ENCODE measurements at regions of chr14 and their contacts with region 1.

Region 1: DNA sequence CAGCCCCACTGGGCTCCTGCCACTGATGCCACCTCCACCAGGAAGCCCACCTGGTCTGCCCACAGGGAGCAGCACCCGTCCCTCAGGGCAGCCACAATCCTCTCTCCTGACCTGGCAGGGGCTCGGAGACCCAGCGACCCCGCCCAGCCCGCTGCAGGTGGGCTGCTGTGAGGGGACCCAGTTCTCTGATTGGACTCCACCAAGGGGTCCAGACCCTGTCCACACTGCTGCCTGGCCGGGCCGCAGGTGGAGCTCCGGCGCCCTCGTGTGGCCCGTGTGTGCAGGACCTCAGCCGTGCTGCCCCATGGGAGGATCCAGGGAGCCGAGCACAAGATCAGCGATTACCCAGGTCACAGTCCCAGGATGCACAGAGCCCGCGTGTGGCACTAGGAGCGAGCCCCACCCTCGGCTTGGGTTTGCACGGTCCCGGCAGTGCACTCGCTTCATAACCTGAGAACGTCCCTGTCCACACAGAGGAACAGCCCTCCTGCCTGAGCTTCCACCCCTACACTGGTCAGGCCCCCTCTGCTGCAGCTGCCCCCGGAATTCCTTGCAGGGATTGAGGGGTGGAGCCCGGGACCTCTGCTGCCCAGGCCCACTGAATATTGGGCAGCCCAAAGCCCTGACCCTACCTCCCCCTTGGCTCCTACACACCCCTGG is 35.4 kb upstream of the TMEM179 start:
- DNase-seq: no peak
- ATAC-seq: peak; percentile 95
- H3K4me3 ChIP-seq: no peak overlapping the region
- H3K27ac ChIP-seq: no peak overlapping the region
- H3K4me1 ChIP-seq: no peaks in the 10 kb centered on the region
- H3K27me3 ChIP-seq: no peaks in the 10 kb centered on the region
- CTCF ChIP-seq: peak; percentile 96

Region 2: DNA sequence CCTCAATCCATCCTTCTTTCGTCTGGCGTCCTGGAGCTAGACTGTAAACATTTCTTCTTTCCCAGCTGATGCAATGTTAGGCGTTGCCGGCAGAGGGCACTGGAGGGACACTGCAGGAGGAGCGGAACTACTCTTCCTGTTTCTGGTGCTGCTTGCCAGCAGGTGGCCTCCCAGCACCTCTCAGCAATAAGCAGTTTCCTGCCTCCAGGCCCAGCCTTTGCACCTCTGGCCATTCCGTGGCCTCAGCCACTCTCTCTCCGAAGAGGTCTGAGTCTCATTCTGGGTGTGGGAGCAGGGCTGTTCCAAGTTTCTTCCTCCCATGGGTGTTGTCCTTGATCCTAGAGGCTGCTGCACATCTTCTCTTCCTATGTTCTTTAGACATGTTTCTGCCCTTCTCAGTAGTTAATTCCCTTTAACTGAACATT is 562.0 kb before region 1 on chr14:
- CTCF ChIA-PET with region 1: no interaction called
- POLR2A ChIA-PET with region 1: no interaction called
- in situ Hi-C with region 1: no loop called
- intact Hi-C with region 1: loop called (anchors 10 kb)
- DNase-seq: peak; percentile 81
- ATAC-seq: peak; percentile 96
- H3K4me3 ChIP-seq: no peak overlapping the region
- H3K27ac ChIP-seq: no peak overlapping the region
- H3K4me1 ChIP-seq: 0 out of 2 replicates have a peak, but pooled peaks cover 3% of the 10 kb centered on the region
- H3K27me3 ChIP-seq: no peaks in the 10 kb centered on the region
- CTCF ChIP-seq: peak; percentile 99